ENCODE measurements at regions of chr16 and their contacts with region 1.

Region 1: DNA sequence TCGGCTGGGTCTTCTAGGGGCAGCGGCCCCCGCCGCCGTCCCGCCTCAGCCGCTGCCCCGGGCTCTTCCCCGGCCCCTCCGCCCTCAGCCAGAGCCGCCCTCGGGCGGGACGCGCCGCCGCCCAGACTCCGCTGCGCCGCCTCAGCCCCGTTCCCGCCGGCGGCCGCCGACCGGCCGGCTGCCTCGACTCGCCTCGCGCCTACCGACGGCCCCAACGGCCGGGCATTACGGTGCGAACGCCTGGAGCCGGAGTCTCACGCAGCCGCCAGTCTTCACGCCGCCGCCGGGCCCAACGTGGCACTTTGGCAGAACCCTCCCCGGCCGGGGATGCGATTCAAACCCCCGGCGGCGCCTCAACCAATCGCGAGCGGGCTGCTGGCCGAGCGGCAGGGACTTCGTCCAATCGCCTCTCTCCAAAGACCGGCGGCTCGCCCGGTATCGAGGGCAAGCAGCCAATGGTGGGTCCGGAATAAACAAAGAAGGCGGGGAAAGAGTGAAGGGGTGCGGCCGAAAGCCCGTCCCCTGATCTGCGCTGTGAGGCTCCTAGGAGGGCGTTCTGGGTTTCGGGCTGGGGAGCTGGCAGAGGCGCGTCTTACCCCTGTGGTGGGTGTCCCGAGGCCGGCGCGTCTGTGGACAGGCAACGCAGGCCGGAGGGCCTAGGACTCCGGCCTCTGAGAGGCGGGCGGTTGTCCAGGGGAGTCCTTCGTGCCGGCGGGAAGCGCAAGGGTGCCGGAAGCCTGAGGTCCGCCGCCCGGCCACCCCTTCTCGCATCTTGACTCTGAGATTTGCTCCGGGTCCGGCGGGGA is at the start of gene CDR2:
- DNase-seq: peak; percentile 99
- ATAC-seq: peak; percentile 96
- total RNA-seq, gene CDR2: 9.5 to 17.9 TPM

Region 2: GRCh38 chr16:22321339-22322001 is 53.0 kb before region 1 on chr16:
- intact Hi-C with region 1: loop called in 1 of 2 experiments (anchors 10 kb)
- DNase-seq: peak; percentile 74
- ATAC-seq: peak; percentile 60 to 76